A673 (cell line): ENCODE measurements at regions of chr4 and their contacts with region 1.

Region 1: GRCh38 chr4:102430461-102430910 is 70.7 kb upstream of the NFKB1 start:
- DNase-seq: no peak
- H3K4me3 ChIP-seq: peak overlapping the region; percentile 52
- H3K27ac ChIP-seq: peak overlapping the region; percentile 46
- H3K4me1 ChIP-seq: peaks cover 5% of the 10 kb centered on the region
- H3K27me3 ChIP-seq: no peaks in the 10 kb centered on the region
- CTCF ChIP-seq: no peak

Region 2: GRCh38 chr4:101556842-101557241 is 873.6 kb before region 1 on chr4:
- CTCF ChIA-PET with region 1: no interaction called
- POLR2A ChIA-PET with region 1: no interaction called
- intact Hi-C with region 1: no loop called
- DNase-seq: no peak
- H3K4me3 ChIP-seq: no peak overlapping the region
- H3K27ac ChIP-seq: no peak overlapping the region
- H3K4me1 ChIP-seq: no peaks in the 10 kb centered on the region
- H3K27me3 ChIP-seq: no peaks in the 10 kb centered on the region
- CTCF ChIP-seq: no peak

Region 3: DNA sequence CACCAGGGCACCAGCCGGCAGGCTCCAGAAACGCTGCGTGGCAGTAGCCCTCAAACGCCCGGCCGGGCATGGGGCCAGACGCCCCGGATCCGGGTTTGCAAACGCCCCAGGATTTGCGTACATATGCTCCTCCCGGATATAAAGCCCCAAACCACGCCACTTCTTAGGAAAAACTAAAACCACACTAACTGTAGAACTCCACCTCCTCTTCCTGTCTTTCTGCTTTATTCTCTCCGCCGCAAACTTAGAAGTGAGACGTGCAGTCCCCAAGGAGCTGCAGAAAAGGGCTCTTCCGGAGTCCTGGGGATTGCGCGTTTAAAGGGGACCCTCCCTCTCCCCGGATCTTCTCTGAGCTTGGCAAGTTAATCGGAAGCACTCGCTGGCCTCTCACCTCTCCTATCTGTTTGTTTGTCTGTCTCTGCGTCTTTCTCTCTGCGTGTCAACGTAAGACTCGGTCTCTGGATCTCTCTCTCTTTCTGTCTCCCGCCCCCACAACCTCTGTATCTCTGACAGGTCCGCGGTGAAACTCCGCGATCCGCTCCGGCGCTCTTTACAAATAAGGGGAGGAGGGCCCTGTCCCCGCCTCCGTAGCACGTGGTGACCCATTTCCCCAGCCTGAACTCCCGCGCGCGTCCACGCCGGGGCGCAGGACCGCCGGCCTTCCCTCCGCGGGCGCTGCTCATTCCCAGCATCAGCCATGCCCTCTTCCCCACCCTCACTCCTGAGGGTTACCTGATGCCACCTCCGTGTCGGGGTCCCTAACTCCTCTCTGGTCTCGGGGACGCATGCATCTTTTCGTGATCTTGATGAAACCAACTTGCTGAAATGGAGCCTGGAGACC is 85.3 kb before region 1 on chr4 and contains the start of gene SLC39A8:
- CTCF ChIA-PET with region 1: interaction called, 20 read pairs
- POLR2A ChIA-PET with region 1: no interaction called
- intact Hi-C with region 1: loop called (anchors 5 kb)
- DNase-seq: peak; percentile 90
- H3K4me3 ChIP-seq: peak within 1 kb of the TSS; percentile 60
- H3K27ac ChIP-seq: peak within 1 kb of the TSS; percentile 58
- H3K4me1 ChIP-seq: peaks cover 14% of the 10 kb centered on the region
- H3K27me3 ChIP-seq: peaks cover 5% of the 10 kb centered on the region
- CTCF ChIP-seq: peak; percentile 76
- total RNA-seq, gene SLC39A8: 8.8 and 12.3 TPM in 2 replicates

Region 4: DNA sequence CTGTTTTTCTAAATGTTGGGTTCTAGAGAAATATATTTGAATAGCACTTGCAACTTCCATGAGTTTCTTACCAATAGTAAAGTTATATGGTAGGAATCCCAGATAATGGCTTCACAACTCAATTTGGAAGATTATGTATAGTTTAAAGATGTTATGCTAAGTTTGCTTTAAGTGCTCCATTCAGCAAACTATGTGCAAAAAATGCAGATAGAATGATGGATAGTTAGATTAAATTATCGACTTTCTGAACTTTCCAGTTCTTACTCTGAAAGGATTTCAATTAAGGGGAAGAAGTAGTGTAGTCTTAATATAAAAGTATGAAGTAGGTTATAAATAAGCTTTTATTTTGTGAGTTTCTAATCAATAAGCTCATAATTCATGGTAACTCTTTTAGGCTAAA is 10.0 kb after region 1 on chr4:
- CTCF ChIA-PET with region 1: interaction called, 17 read pairs
- POLR2A ChIA-PET with region 1: no interaction called
- intact Hi-C with region 1: no loop called
- DNase-seq: no peak
- H3K4me3 ChIP-seq: no peak overlapping the region
- H3K27ac ChIP-seq: no peak overlapping the region
- H3K4me1 ChIP-seq: peaks cover 20% of the 10 kb centered on the region
- H3K27me3 ChIP-seq: no peaks in the 10 kb centered on the region
- CTCF ChIP-seq: no peak

Region 5: DNA sequence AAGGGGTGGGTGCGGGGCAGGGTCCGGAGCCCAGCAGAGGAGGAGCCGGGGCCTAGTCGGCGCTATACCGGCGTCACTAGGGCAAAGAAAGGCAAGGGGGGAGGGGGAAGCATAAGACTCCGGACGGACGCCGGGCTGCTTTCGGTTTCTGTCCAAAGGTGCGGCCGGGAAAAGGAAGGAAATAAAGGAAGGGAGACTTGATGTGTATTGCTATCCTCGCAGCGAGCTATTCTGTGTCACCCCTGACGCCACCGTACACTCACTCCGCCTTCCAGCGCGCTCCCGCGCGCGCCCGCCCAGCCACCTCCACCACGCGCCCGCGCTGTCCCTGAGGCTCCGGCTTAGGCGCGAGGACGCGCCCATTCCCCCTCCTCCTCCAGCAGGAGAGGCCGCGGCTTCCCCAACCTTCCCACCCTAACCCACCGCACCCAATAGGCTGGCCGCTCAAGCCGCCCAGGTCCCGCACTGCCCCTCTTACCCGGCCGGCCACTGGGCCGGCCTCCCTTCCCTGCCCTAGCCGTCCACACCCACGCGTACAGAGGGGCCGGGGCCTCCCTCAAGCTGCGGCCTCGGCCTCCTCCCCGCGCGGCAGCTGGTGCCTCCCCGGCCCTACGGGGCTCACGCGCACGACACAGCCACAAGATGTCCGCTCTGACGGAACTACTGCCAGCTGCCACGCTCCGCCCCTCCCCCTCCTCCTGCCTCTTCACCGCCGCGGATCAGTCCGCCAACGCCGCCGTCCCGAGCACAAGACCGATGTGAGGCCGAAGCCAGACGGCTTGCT is 396.6 kb after region 1 on chr4 and contains the start of gene UBE2D3:
- CTCF ChIA-PET with region 1: interaction called, 3 read pairs
- POLR2A ChIA-PET with region 1: no interaction called
- intact Hi-C with region 1: loop called (anchors 5 kb)
- DNase-seq: peak; percentile 96
- H3K4me3 ChIP-seq: peak within 1 kb of the TSS; percentile 98
- H3K27ac ChIP-seq: peak within 1 kb of the TSS; percentile 100
- H3K4me1 ChIP-seq: peaks cover 23% of the 10 kb centered on the region
- H3K27me3 ChIP-seq: no peaks in the 10 kb centered on the region
- CTCF ChIP-seq: 0 out of 2 replicates have a peak, but pooled peaks have one; percentile 11
- total RNA-seq, gene UBE2D3: 354 and 378 TPM in 2 replicates

Region 6: DNA sequence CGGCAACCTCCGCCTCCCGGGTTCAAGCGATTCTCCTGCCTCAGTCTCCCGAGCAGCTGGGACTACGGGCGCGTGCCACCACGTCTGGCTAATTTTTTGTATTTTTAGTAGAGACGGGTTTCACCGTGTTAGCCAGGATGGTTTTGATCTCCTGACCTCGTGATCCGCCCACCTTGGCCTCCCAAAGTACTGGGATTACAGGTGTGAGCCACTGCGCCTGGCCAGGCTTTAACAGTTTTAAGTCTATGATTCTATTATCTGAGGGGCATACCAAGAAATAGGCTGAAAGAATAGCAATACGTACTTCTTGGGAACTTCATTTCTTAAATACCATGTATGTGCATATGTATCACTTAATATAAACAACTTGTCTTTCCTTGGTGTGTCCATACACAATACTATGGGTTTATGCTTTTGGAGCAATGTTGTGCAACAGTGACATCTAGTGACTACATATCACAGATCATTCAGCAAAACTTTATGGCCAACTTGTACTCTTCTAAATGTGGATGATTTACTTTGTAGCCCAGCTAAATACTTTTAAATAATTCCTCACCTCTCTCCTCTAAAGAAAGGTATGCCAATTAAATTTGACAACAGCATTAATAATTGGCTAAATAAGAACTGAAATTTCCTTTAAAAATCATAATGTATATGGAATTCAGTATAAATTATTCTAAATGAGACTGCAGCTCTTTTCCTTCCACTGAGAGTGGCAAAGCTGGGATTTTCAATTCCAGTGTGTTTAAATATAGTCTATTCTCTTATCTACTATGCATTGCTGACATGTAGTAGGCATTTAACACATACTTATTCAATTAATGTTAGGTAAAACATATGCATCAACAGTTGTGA is 578.6 kb after region 1 on chr4:
- CTCF ChIA-PET with region 1: no interaction called
- POLR2A ChIA-PET with region 1: no interaction called
- intact Hi-C with region 1: loop called (anchors 2 kb)
- DNase-seq: peak; percentile 74
- H3K4me3 ChIP-seq: no peak overlapping the region
- H3K27ac ChIP-seq: no peak overlapping the region
- H3K4me1 ChIP-seq: no peaks in the 10 kb centered on the region
- H3K27me3 ChIP-seq: peaks cover 2% of the 10 kb centered on the region
- CTCF ChIP-seq: peak; percentile 70

Region 7: GRCh38 chr4:103091601-103092223 is 661.2 kb after region 1 on chr4:
- CTCF ChIA-PET with region 1: no interaction called
- POLR2A ChIA-PET with region 1: no interaction called
- intact Hi-C with region 1: loop called (anchors 5 kb)
- DNase-seq: peak; percentile 79
- H3K4me3 ChIP-seq: no peak overlapping the region
- H3K27ac ChIP-seq: no peak overlapping the region
- H3K4me1 ChIP-seq: no peaks in the 10 kb centered on the region
- H3K27me3 ChIP-seq: no peaks in the 10 kb centered on the region
- CTCF ChIP-seq: peak; percentile 73

Region 8: GRCh38 chr4:103306828-103307375 is 876.4 kb after region 1 on chr4:
- CTCF ChIA-PET with region 1: no interaction called
- POLR2A ChIA-PET with region 1: no interaction called
- intact Hi-C with region 1: no loop called
- DNase-seq: no peak
- H3K4me3 ChIP-seq: no peak overlapping the region
- H3K27ac ChIP-seq: no peak overlapping the region
- H3K4me1 ChIP-seq: no peaks in the 10 kb centered on the region
- H3K27me3 ChIP-seq: peaks cover 4% of the 10 kb centered on the region
- CTCF ChIP-seq: no peak